HEK293T (cell line): ENCODE measurements at regions of chr19 and their contacts with region 1.

Region 1: DNA sequence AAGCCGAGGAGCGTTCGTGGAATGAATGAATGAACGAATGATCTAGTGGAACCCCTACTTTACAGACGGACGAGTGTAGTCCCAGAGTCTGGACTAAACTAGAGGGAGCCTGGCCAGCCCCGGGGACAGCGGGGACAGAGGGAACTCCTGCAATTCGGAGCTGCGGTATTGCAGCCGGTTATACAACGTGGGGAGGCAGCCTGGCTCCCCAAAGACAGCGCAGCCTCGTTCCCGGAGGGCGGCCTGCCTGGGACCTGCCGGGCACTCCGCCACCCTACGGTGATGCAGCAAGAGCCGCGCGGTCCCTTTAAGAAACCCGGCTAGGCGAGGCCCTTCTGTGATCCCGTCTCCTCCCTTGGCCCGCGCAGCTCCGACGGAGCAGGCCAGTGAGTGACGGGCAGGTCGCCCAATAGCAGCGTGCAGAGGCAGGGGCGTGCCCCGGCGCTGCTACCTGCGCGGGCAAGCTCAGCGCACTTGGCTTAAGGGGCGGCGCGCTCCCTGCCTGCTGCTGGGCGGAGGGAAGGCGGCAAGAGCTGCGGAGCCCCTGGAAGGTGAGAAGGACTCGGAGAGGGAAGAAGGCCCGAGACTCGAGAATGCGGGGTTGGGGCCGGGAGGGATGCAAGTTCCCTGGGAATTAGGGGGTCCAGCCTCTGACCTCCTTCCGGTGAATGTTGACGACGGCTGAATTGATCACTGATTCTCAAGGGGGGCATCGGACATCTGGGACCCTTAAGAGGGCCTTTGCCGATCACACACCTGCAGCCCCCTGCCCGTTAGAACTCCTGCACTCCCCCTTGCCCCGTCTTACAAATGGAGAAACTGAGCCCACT is at the start of gene ABCA7:
- DNase-seq: peak; percentile 95

Region 2: GRCh38 chr19:664913-665443 is 374.9 kb before region 1 on chr19:
- CTCF ChIA-PET with region 1: no interaction called
- POLR2A ChIA-PET with region 1: no interaction called
- DNase-seq: peak; percentile 86

Region 3: DNA sequence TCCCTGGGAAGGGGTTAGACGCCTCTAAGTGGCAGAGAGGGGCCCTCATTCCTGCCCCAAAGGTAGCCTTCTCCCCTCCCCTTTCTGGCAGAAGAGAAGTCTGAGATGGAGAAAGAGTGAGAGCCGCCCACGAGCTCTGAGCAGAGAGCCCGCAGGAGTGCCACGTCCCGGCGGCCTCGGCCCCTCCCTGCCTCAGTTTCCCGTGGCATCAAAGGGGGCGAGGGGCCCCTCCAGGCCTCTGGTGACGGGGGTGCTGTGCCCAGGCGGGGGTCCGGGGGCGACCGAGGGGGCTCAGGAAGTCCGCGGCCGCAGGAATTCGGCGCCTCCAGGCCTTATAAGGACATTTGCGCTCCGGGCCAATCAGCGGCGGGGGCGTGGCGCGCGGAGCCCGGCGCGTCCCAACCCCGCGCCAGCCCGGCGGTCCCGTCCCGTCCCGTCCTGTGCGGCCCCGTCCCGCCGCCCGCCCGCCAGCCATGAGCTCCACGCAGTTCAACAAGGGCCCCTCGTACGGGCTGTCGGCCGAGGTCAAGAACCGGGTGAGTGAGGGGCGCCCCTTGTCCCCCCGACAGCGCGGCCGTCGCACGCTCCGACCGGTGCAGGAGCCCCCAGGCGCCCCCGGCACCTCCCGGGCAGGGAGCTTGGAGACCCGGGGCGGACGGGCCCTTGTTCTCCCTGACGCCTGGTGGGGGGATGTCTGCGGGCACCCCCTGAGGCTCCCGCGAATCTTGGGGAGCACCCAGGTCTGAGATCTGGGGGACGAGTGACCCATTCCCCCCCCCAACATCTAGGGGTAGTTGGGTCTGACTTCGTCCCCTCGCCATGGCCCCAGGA is 13.5 kb before region 1 on chr19 and contains the start of gene CNN2:
- CTCF ChIA-PET with region 1: no interaction called
- POLR2A ChIA-PET with region 1: interaction called, 29 read pairs
- DNase-seq: peak; percentile 75